PC-9 (cell line): ENCODE measurements at regions of chr4 and their contacts with region 1.

Region 1: GRCh38 chr4:126627255-126627654 is 1005.5 kb upstream of the INTU start:
- DNase-seq: no peak
- H3K4me3 ChIP-seq: no peak overlapping the region
- H3K27ac ChIP-seq: no peak overlapping the region
- H3K4me1 ChIP-seq: no peaks in the 10 kb centered on the region
- H3K27me3 ChIP-seq: no peaks in the 10 kb centered on the region
- CTCF ChIP-seq: peak; percentile 58

Region 2: DNA sequence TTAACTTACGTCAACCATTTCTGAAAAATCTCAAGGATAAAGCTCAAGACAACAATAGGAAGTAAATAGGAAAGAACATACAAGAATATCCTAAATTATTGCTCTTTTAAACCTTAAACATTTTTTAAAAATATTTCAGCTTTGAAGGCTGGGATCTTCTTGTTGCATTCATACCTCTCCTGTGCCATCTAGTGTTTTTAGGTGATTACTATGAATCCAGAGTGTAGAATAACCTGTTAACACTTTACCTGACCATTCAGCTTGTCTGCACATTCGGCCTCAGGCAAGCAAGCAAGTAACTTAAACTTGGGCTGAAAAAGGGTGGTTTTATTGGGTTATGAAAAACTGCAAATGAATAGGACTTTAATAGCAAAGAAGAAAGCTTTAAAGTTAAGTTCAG is 497.7 kb after region 1 on chr4:
- CTCF ChIA-PET with region 1: no interaction called
- POLR2A ChIA-PET with region 1: no interaction called
- intact Hi-C with region 1: loop called (anchors 10 kb)
- DNase-seq: no peak
- H3K4me3 ChIP-seq: no peak overlapping the region
- H3K27ac ChIP-seq: no peak overlapping the region
- H3K4me1 ChIP-seq: no peaks in the 10 kb centered on the region
- H3K27me3 ChIP-seq: no peaks in the 10 kb centered on the region
- CTCF ChIP-seq: peak; percentile 25; the same call in 1 of the 2 replicates

Region 3: GRCh38 chr4:127486248-127486647 is 859.0 kb after region 1 on chr4:
- CTCF ChIA-PET with region 1: no interaction called
- POLR2A ChIA-PET with region 1: no interaction called
- intact Hi-C with region 1: loop called (anchors 10 kb)
- DNase-seq: no peak
- H3K4me3 ChIP-seq: no peak overlapping the region
- H3K27ac ChIP-seq: no peak overlapping the region
- H3K4me1 ChIP-seq: no peaks in the 10 kb centered on the region
- H3K27me3 ChIP-seq: no peaks in the 10 kb centered on the region
- CTCF ChIP-seq: no peak